G401 (cell line): ENCODE measurements at regions of chr1 and their contacts with region 1.

Region 1: DNA sequence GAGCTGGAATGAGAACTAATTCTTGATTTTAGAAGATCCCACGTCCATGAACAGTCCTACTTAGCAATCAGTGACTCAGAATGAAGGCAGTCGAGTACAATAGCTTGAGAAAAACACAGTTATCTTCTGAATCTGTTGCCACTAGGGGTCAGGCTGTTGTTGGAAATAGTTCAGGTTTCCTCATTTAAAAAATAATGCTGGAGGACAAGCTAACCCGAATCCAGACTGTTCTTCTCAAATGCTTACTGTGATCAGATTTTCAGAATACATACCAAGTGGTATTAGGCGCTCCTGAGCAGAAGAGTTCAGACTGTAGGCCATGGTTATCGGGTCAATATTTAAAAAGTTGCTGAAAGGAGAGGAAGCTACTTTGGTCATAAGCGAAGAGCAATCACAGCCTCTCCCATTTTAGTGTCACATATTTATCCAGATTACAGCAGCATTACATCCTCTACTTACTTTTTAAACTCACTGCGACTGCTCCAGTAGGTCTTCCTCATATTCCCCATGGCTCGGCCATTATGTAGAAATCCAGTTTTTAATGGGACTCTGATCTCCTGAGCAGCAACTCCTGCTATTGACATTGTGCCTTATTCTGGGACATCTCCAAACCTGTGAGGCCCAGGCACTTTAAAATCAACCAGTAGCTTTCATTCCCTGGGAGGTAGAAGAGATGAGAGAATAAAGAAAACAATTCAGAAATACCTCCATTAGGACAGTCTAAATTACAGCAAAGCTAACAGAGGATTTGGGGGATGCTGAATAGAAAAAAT is 10.9 kb downstream of the ERRFI1 start:
- DNase-seq: peak; percentile 90

Region 2: DNA sequence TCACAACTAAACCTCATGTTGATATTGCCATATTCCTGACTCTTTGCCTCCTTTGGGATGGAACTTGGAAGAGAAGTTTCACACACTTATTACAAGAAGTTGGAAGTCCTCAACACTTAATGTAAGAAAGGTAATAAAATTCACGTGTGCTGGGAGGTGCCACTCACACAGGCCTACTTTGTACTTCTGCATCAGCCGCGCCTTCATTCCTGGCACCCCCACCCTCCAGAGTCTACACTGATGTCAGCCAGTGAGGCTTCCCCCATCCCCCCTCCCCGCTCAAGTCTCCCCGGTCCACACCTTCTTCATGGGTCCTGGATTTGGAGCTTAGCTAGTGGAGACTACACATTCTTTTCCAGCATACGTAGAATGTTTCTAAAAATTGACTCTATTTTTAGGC is 277.9 kb after region 1 on chr1:
- in situ Hi-C with region 1: loop called (anchors 10 kb)
- DNase-seq: no peak